ENCODE measurements at regions of chr15 and their contacts with region 1.

Region 1: DNA sequence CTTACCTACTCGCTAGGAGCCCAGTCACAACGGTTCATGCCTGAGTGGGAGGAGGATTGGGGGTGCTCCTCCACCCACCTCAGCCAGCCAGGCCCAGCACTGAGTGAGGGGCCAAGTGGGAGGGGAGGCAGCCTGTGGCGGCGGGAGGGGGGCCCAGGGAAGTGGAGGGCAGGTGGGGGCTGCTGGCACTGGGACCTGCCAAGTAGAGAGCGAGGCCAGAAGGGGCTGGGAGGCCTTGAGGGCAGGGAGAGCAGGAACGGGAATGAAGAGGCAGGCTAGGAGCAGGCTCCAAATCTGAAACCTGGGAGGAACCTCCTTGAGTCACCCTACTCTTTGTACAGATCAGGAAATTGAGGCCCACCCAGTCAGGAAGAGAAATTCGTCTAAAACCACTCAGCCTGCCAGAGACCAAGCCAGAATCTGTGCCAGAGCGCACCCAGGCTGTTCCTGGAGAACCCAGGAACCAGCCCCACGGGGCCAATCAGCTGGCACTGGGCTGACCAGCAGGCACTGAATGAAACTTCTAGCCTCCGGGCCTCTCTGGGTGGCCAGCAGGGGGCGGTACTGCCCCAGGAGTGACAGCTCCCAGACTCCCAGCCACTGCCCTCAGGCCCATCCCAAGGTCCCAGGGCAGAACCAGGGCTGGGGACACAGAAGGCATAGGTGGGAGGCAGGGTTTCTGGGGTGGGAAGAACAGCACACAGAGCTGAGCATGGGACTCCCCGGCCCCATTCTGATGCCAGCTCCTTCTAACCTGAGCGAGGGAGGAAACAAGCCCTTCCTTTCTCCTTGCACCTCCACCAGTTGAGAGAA is 14.8 kb upstream of the CYP11A1 start:
- DNase-seq: peak; percentile 51 to 87 (median 68)
- ATAC-seq: peak; percentile 53
- H3K4me3 ChIP-seq: no peak overlapping the region
- H3K4me3 Mint-ChIP-seq: no peak overlapping the region
- H3K27ac ChIP-seq: no peak overlapping the region
- H3K27ac Mint-ChIP-seq: no peak overlapping the region
- H3K4me1 ChIP-seq: peaks cover 42% of the 10 kb centered on the region
- H3K4me1 Mint-ChIP-seq: peaks cover 19% of the 10 kb centered on the region
- H3K27me3 ChIP-seq: no peaks in the 10 kb centered on the region
- H3K27me3 Mint-ChIP-seq: no peaks in the 10 kb centered on the region
- CTCF ChIP-seq: peak; percentile 96

Region 2: GRCh38 chr15:74433592-74434262 is 51.5 kb after region 1 on chr15 and contains the start of gene SEMA7A:
- CTCF ChIA-PET with region 1: interaction called, 20 read pairs
- POLR2A ChIA-PET with region 1: interaction called, 4 read pairs
- intact Hi-C with region 1: loop called (anchors 1 kb)
- DNase-seq: peak; percentile 35 to 93 (median 67)
- ATAC-seq: peak; percentile 77
- H3K4me3 ChIP-seq: peak within 1 kb of the TSS; percentile 53
- H3K4me3 Mint-ChIP-seq: peak within 1 kb of the TSS; percentile 85
- H3K27ac ChIP-seq: no peak within 1 kb of the TSS
- H3K27ac Mint-ChIP-seq: peak within 1 kb of the TSS; percentile 39
- H3K4me1 ChIP-seq: peaks cover 23% of the 10 kb centered on the region
- H3K4me1 Mint-ChIP-seq: peaks cover 16% of the 10 kb centered on the region
- H3K27me3 ChIP-seq: no peaks in the 10 kb centered on the region
- H3K27me3 Mint-ChIP-seq: no peaks in the 10 kb centered on the region
- CTCF ChIP-seq: no peak
- total RNA-seq, gene SEMA7A: 2.3 to 2.7 TPM

Region 3: DNA sequence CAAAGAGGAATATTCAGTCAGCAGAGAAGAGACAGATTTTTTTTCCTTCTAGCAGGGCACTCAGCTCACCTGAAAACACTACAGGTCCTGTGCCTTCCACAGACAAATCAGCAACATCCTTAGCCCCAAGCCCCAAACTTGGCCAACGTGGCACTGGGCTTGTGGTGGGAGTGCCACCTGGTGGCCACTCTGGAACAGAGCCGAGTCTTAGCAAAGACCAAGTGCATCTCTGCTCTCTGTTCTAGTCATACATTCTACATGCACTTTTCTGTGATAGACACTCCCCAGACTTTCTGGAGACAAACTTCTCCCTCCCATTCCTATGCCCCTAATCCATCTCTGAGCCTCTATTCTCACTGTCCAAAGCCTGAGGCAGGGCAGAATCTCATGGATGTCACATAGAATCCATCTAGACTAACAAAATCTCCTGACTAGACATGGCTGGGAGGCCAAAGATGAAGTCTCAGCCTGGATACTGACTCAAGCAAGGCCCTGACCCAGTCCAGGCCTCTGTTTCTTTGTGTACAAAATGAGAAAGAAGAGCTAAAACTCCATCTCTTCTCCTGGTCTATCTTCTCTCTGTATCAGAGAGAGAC is 56.6 kb after region 1 on chr15:
- CTCF ChIA-PET with region 1: interaction called, 20 read pairs
- POLR2A ChIA-PET with region 1: interaction called, 4 read pairs
- intact Hi-C with region 1: loop called (anchors 1 kb)
- DNase-seq: peak; percentile 59 to 86 (median 69)
- ATAC-seq: peak; percentile 84
- H3K4me3 ChIP-seq: no peak overlapping the region
- H3K4me3 Mint-ChIP-seq: peak overlapping the region; percentile 38
- H3K27ac ChIP-seq: no peak overlapping the region
- H3K27ac Mint-ChIP-seq: no peak overlapping the region
- H3K4me1 ChIP-seq: peaks cover 13% of the 10 kb centered on the region
- H3K4me1 Mint-ChIP-seq: peaks cover 16% of the 10 kb centered on the region
- H3K27me3 ChIP-seq: no peaks in the 10 kb centered on the region
- H3K27me3 Mint-ChIP-seq: no peaks in the 10 kb centered on the region
- CTCF ChIP-seq: peak; percentile 82

Region 4: DNA sequence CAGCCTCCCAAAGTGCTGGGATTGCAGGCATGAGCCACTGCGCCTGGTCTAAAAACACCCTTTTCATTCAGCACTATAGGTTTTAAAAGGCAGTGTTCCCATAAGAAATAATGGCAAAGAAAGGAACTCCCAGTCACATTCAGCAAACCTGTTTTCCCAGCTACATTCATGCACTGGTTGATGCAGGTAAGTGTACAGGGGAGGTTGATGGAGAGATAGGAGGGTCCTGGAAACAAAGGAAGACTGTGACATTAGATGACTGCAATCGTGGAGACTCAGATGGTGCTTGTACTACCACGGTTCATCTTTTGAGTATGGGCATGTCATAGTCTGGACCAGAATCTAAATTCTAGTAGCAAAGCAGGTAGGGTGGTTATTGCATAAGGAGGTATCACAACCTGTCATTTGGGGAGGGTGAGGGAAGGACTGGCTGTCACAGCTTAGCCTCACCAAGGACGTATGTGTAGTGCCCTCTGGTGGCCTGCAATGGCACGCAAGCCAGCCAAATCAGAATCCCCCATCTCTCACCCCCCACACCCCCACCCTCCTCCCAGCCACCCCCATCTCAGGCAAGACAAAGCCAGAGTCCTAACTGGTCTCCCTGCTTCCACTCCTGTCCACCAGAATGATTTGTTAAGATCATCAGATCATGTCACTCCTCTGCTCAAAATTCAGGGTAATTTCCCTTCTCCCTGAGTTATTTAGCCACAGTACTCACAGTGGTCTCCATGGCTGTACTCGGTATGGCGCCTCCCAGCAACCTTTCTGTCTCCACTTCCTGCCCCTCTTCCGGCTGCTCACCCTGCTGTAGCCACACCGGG is 107.5 kb after region 1 on chr15:
- CTCF ChIA-PET with region 1: no interaction called
- POLR2A ChIA-PET with region 1: no interaction called
- intact Hi-C with region 1: loop called in 1 of 2 experiments (anchors 1 kb)
- DNase-seq: peak; percentile 46 to 83 (median 61)
- ATAC-seq: peak; percentile 96
- H3K4me3 ChIP-seq: no peak overlapping the region
- H3K4me3 Mint-ChIP-seq: no peak overlapping the region
- H3K27ac ChIP-seq: no peak overlapping the region
- H3K27ac Mint-ChIP-seq: no peak overlapping the region
- H3K4me1 ChIP-seq: peaks cover 4% of the 10 kb centered on the region
- H3K4me1 Mint-ChIP-seq: peaks cover 11% of the 10 kb centered on the region
- H3K27me3 ChIP-seq: no peaks in the 10 kb centered on the region
- H3K27me3 Mint-ChIP-seq: no peaks in the 10 kb centered on the region
- CTCF ChIP-seq: peak; percentile 69

Region 5: DNA sequence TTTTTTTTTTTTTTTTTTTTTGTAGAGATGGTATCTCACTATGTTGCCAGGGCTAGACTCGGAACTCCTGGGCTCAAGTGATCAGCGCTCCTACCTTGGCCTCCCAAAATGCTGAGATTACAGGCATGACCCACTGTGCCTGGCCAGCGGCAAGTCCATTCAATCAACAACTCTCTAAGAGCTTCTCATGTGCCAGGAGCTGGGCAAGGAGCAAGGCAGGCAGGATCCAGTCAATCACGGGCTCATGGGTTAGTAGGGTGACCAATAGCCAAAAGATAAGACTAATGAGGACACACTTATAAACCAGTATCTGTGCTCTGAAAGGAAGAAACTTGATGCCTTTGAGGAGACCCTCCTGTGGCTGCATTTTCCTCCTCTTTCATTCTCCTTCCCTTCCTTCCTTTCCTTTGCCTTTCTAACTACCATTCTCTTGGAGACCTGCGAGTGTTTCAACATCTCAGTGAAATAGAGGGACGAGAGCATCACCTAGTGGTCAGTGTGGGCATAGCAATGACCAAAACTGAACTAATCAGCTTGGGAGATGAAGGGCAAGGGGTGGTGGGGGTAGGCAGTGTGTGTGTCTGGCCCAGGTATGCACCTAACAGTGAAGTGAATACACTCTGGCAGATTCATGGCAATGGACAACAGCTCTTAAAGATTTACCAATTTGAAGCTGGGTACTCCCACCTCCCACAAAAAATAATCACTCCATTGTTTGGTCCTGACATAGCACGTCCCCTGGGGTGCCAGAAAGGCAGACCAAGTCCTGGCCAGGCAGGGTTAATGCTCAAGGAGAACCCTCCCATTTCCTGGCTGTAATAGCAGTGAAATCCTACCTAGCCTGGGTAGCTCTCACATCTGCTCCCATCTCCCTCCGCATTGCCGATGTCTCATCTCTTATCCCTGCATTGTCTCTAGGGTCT is 568.1 kb after region 1 on chr15:
- CTCF ChIA-PET with region 1: no interaction called
- POLR2A ChIA-PET with region 1: no interaction called
- intact Hi-C with region 1: loop called (anchors 5 to 10 kb)
- DNase-seq: peak; percentile 58 to 87 (median 76)
- ATAC-seq: peak; percentile 96
- H3K4me3 ChIP-seq: no peak overlapping the region
- H3K4me3 Mint-ChIP-seq: no peak overlapping the region
- H3K27ac ChIP-seq: no peak overlapping the region
- H3K27ac Mint-ChIP-seq: no peak overlapping the region
- H3K4me1 ChIP-seq: peaks cover 4% of the 10 kb centered on the region
- H3K4me1 Mint-ChIP-seq: peaks cover 5% of the 10 kb centered on the region
- H3K27me3 ChIP-seq: peaks cover 0 to 6% of the 10 kb centered on the region in 2 experiments
- H3K27me3 Mint-ChIP-seq: no peaks in the 10 kb centered on the region
- CTCF ChIP-seq: peak; percentile 97

Measured in CD4-positive, alpha-beta T cell (primary cell).